Activated naive CD4-positive, alpha-beta T cell treated with anti-CD3 and anti-CD28 coated beads for 36 hours (primary cell): ENCODE measurements at regions of chr12 and their contacts with region 1.

Region 1: DNA sequence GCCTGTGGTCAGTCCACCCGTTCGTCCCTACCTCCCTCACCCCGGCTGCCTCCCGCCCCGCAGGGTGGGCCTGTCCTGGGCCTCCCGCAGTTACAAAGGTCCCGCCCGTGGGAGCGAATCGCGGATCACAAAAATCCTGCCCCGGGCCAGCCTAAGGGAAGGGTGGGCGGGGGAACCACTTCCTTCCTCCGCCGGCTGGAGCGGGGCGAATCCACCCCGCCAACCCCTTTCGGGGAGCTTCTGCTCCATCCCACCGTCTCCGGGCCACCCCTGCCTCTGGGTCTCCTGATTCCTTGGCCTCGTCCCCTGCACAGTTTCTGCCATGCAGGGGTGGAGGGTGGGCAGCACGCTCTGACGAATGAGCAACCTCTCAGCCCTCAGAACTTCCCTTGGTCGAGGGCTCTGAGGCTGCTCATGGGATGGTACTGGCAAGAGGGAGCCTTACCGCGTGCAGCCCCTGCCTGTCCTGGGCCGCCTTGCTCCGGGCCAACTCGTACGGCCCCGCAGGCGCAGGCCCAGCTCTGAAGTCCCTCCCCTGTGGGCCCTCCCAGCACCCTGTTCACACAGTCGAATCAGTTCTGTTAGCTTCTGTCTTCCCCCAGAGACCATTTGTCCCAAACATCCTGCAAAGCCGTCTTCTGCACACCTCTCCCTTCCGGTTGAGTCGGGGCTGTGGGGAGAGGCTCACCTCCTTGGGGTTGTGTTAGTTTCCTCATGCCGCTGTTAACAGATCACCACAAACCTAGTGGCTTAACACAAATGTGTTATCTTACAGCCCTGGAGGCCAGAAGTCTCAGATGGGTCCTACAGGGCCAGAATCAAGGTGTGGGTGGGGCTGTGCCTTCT is 589 bp upstream of the HVCN1 start:
- DNase-seq: peak; percentile 69
- H3K4me3 Mint-ChIP-seq: peak overlapping the region; percentile 80
- H3K27ac Mint-ChIP-seq: peak overlapping the region; percentile 39
- H3K4me1 Mint-ChIP-seq: peaks cover 38% of the 10 kb centered on the region
- H3K27me3 Mint-ChIP-seq: no peaks in the 10 kb centered on the region

Region 2: GRCh38 chr12:108722992-108723766 is 1966.3 kb before region 1 on chr12:
- CTCF ChIA-PET with region 1: no interaction called
- intact Hi-C with region 1: no loop called
- DNase-seq: no peak
- H3K4me3 Mint-ChIP-seq: no peak overlapping the region
- H3K27ac Mint-ChIP-seq: no peak overlapping the region
- H3K4me1 Mint-ChIP-seq: peaks cover 32% of the 10 kb centered on the region
- H3K27me3 Mint-ChIP-seq: no peaks in the 10 kb centered on the region

Region 3: DNA sequence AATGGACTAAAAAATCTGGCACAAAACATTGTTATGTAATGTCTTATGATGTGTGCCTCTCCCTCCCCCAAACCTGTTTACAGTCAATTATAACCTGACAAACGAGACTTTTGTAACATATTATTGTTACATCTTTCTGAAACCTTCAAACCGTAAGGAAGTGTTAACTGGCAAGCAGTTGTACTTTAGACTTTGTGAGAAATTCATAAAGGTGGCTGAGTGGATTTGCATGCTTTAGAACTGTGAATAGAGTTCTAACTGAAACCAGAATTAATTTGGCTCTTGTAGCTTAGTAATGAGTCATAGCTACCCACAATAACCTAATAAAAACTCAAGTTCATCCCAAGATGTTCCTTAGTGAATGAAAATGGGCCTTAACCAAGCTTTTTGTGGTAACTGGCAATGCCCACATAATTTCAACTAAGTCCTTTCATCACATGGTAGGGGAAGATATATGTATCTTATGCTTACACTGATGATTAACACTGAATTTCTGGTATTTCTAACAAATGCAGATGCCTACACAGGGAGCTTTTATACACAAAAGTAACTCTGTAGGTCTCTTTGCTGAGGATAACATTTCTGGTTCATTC is 157.7 kb before region 1 on chr12:
- CTCF ChIA-PET with region 1: no interaction called
- intact Hi-C with region 1: no loop called
- DNase-seq: no peak
- H3K4me3 Mint-ChIP-seq: no peak overlapping the region
- H3K27ac Mint-ChIP-seq: peak overlapping the region; percentile 37
- H3K4me1 Mint-ChIP-seq: peaks cover 28% of the 10 kb centered on the region
- H3K27me3 Mint-ChIP-seq: no peaks in the 10 kb centered on the region

Region 4: DNA sequence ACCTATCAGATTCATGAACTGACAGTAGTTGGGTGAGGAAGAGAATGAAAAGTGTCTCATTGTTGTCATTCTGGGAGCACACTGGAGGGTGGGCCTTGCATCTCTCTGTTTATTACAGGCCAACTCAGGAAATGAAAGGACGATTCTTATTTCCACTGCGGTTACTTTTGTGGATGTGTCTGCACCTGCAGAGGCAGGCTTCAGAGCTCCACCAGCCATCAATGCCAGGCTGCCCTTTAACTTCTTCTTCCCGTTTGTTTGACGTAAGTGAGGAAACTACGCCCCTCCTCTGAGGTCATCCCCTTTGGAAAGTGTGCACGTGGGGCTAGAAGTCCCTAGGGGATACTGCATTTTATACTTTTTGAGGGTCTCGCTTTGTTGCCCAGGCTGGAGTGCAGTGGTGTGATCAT is 41.9 kb before region 1 on chr12:
- CTCF ChIA-PET with region 1: interaction called, 4 read pairs
- intact Hi-C with region 1: loop called (anchors 2 kb)
- DNase-seq: peak; percentile 61
- H3K4me3 Mint-ChIP-seq: no peak overlapping the region
- H3K27ac Mint-ChIP-seq: peak overlapping the region; percentile 66
- H3K4me1 Mint-ChIP-seq: peaks cover 32% of the 10 kb centered on the region
- H3K27me3 Mint-ChIP-seq: no peaks in the 10 kb centered on the region

Region 5: GRCh38 chr12:110670161-110670701 is 19.3 kb before region 1 on chr12:
- CTCF ChIA-PET with region 1: no interaction called
- intact Hi-C with region 1: loop called (anchors 2 kb)
- DNase-seq: peak; percentile 69
- H3K4me3 Mint-ChIP-seq: peak overlapping the region; percentile 34
- H3K27ac Mint-ChIP-seq: peak overlapping the region; percentile 91
- H3K4me1 Mint-ChIP-seq: peaks cover 32% of the 10 kb centered on the region
- H3K27me3 Mint-ChIP-seq: no peaks in the 10 kb centered on the region

Region 6: DNA sequence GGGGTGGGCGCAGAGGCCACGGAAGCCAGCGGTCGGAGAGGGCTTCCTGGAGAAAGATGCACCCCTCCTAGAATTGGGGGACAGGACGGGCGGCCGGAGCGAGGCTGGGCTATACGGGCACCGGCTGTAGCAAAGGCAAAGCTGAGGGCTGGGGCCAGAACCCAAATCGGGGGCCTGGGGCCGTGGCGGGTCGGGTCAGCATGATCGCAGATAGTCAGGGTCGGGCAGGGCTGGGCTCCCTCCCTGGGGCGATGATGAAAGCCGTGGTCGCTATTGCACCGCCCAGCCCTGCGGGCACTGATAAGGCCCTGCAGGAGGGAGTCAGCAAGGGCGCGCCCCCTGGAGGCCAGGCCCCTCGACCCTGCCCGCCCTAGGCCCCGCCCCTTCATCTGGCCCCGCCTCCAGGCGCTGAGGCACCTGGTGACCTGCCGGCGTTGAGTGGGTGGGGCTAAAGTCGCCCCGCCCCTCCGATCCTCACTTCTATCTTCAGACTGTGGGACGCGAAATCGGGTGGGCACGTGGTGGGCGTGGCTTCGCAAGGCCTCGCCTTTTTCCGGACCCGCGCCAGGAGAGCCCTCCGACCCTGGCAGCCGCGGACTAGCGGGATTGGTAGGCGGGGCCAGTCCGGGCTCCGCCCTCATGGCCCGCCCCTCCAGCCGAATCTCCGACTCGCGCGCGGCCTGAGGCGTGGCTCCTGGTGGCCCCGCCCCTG is 715.8 kb after region 1 on chr12:
- CTCF ChIA-PET with region 1: no interaction called
- intact Hi-C with region 1: no loop called
- DNase-seq: peak; percentile 99
- H3K4me3 Mint-ChIP-seq: peak overlapping the region; percentile 77
- H3K27ac Mint-ChIP-seq: peak overlapping the region; percentile 96
- H3K4me1 Mint-ChIP-seq: peaks cover 57% of the 10 kb centered on the region
- H3K27me3 Mint-ChIP-seq: no peaks in the 10 kb centered on the region